ENCODE measurements at regions of chr7 and their contacts with region 1.

Region 1: GRCh38 chr7:96414931-96415292 is 93.0 kb upstream of the SLC25A13 start:
- DNase-seq: peak; percentile 44
- H3K4me3 Mint-ChIP-seq: no peak overlapping the region
- H3K27ac Mint-ChIP-seq: no peak overlapping the region
- H3K4me1 Mint-ChIP-seq: peaks cover 11% of the 10 kb centered on the region
- H3K27me3 Mint-ChIP-seq: no peaks in the 10 kb centered on the region
- CTCF ChIP-seq: peak; percentile 38

Region 2: DNA sequence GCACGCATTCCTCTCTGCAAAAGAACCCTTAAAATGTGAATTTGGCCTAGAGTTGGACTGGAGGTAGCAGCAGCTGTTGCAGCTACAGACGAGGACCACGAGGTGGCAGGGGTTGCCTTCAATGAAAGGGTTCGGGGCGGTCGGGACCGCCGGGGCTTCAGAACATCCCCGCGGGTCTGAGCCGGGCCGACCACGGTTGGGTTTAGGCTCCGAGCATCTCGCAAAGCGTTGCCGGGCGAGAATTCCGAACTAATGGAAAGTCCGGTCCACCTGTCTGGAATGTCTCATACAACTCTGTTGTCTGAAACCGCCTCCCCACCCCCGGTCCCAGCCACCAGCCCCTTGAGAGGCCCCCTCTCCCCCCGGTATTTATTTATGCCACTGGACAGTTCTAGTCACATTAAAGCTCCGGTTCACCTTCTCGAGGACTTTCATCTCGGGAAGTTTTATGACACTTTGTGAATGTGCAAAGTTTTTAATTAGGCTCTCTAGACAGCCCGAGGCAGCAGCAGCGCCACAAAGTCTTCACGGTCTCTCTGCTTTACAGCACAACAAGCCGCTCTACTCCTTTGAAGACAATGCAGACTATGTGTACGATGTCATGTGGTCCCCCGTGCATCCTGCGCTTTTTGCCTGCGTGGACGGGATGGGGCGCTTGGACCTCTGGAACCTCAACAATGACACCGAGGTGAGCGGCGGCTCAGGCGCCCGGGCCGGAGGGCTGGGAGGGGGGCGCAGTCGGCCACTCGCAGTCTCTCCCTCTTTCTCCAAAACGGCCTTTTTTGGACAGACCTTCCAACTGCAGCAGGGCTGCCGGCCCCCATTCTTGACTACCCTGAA is 339.2 kb before region 1 on chr7:
- CTCF ChIA-PET with region 1: no interaction called
- intact Hi-C with region 1: loop called (anchors 10 kb)
- DNase-seq: peak; percentile 53
- H3K4me3 Mint-ChIP-seq: peak overlapping the region; percentile 72
- H3K27ac Mint-ChIP-seq: no peak overlapping the region
- H3K4me1 Mint-ChIP-seq: peaks cover 20% of the 10 kb centered on the region
- H3K27me3 Mint-ChIP-seq: no peaks in the 10 kb centered on the region
- CTCF ChIP-seq: peak; percentile 71

Region 3: GRCh38 chr7:96548664-96549063 is 133.8 kb after region 1 on chr7:
- CTCF ChIA-PET with region 1: no interaction called
- intact Hi-C with region 1: loop called (anchors 10 kb)
- DNase-seq: peak; percentile 33
- H3K4me3 Mint-ChIP-seq: no peak overlapping the region
- H3K27ac Mint-ChIP-seq: no peak overlapping the region
- H3K4me1 Mint-ChIP-seq: peaks cover 20% of the 10 kb centered on the region
- H3K27me3 Mint-ChIP-seq: no peaks in the 10 kb centered on the region
- CTCF ChIP-seq: no peak

Region 4: DNA sequence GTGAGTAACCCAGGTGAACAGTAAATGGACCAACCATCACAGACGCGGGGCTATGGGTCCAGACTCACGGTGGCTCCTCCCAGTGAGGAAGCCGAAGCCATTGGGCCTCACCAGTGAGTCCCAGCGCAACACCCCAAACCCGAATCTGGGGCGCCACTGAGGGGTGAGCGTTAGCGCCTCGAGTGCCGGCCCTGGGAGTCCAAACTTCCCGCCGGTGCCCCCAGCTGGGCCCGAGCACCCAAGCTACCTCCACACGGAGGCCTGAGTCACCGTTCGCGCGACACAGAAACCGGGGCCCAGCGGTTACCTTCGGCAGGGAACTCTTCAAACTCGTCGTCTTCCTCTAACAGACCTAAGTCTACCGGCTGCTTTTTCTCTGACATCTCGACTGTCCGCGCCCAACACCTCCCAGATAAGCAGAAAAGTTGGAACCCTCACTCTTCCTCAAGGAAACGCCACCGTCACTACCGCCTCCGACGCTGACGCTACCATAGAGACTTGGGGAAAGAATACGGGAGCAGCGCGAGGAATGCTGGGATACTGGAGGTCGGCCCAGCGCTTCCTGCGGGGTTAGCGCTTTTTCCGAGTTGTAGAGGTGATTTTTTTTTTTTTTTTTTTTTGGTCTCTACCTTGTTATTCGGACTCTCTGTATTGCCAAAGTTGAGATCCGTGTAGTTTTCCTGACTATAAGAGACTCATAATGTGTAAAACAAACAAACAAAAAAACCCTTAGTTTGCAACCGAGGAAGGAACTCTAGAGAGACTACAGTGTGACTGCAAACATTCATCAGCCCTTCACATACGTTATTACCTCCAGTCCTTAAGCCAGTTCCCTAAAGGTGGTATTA is 294.7 kb after region 1 on chr7 and contains the start of gene SEM1:
- CTCF ChIA-PET with region 1: no interaction called
- intact Hi-C with region 1: loop called (anchors 10 kb)
- DNase-seq: peak; percentile 71
- H3K4me3 Mint-ChIP-seq: peak within 1 kb of the TSS; percentile 95
- H3K27ac Mint-ChIP-seq: peak within 1 kb of the TSS; percentile 100
- H3K4me1 Mint-ChIP-seq: no peaks in the 10 kb centered on the region
- H3K27me3 Mint-ChIP-seq: no peaks in the 10 kb centered on the region
- CTCF ChIP-seq: no peak
- total RNA-seq, gene SEM1: 59.8 and 71.2 TPM in 2 replicates